ENCODE measurements at regions of chr10 and their contacts with region 1.

Region 1: DNA sequence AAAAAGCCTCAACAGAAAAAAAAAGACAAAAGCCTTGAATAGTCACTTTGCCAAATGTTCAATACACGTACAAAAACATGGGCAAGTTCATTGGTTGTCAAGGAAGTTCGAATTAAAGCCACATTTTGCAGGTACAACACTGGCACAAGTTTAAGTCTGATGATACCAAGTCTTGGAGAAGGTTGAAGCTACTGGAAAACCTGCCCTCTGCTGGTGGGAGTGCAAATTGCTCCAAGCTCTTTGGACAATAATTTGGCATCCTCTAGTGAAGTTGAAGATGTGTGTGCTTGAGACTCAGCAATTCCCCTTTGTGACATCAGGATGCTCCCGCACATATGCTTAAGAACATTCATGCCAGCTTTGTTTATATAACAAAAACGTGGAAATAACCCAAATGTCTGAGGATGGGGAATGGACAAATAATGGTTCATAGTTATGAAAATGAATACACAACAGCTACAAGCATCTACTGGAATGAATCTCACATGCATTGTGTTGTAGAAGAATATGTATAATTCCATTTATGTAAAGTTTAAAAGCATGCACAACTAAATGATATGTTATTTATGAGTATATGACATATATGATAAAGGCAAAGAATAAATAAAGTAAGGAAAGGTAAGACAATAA is 120.0 kb upstream of the PLPP4 start:
- DNase-seq: peak; percentile 66
- H3K4me3 ChIP-seq: no peak overlapping the region
- H3K27ac ChIP-seq: no peak overlapping the region
- H3K4me1 ChIP-seq: no peaks in the 10 kb centered on the region
- H3K27me3 ChIP-seq: peaks cover 0 to 2% of the 10 kb centered on the region in 2 experiments
- CTCF ChIP-seq: peak; percentile 82 to 85
- POLR2A ChIP-seq: no peak

Region 2: DNA sequence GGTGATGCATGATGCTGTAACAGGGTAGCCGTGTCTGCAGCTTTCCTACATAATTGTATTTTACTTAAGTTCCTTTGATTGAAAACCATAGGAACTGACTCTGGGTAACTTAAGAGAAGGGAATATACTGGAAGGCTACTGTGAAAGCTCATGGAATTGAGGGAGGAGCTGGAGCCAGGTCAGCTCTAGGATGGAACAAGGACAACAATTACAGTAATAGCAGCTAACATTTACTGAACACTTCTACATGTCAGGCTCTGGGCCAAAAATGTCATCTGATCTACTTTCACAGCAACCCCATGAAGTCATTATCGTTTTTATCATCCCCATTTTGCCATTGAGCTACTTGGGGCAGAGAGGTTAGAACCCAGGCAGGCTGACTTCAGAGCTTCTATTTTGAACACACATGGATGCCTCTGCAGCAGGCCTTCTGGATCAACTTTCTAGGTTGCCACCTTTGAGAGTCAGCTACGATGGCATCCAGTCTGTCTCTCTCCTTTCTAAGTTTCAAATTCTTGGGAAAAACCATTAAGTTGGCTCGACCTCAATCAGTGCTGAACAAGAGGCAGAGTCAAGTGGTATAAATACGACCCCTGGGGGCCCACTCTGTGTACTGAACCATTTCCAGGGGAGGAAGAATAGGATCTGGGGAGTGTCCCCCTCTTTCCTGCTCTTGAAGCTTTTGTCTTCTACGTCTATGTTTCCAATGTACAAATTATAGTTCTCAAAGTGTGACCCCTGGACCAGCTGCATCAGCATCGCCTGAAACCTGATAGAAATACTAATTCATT is 152.3 kb before region 1 on chr10:
- CTCF ChIA-PET with region 1: no interaction called
- POLR2A ChIA-PET with region 1: no interaction called
- dilution Hi-C with region 1: no loop called
- intact Hi-C with region 1: no loop called
- DNase-seq: no peak
- H3K4me3 ChIP-seq: no peak overlapping the region
- H3K27ac ChIP-seq: no peak overlapping the region
- H3K4me1 ChIP-seq: peaks cover 2% of the 10 kb centered on the region
- H3K27me3 ChIP-seq: no peaks in the 10 kb centered on the region
- CTCF ChIP-seq: no peak
- POLR2A ChIP-seq: no peak

Region 3: DNA sequence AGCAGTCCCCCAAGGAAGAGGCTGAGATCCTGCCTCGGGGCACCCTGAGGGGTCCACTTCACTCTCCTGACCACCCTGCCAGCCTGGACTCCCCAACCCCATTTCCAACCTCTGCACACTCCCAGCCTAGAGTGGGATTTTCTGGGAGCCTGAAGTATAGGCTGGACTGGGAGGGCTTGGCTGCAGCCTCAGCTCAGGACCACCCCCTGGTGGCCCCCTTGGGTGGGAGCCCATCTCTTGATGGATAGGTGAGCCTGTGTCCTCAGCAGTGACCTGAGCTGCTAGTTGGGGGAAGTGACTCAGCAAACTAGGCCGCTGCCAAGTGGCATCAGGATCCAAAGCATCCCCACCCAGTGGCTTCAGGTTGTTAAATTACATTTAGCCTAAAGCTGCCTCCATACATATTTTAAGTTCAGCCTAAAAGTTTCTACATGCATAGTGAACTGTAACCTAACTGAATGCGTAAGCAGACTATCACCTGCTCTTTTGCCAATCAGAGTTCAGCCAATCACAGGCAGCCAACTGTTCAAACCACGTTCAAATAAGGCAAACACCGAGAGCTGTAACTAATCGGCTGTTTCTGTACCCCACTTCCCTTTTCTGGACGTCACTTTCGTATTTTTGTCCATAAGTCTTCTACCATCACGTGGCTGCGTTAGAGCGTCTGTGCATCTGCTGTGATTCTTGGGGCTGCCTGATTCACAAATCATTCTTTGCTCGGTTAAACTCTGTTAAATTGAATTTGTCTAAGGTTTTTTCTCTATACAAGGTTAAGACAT is 264.0 kb after region 1 on chr10:
- CTCF ChIA-PET with region 1: interaction called, 4 read pairs
- POLR2A ChIA-PET with region 1: no interaction called
- dilution Hi-C with region 1: no loop called
- intact Hi-C with region 1: loop called (anchors 5 kb)
- DNase-seq: peak; percentile 47
- H3K4me3 ChIP-seq: no peak overlapping the region
- H3K27ac ChIP-seq: no peak overlapping the region
- H3K4me1 ChIP-seq: peaks cover 5% of the 10 kb centered on the region
- H3K27me3 ChIP-seq: no peaks in the 10 kb centered on the region
- CTCF ChIP-seq: peak; percentile 51 to 71
- POLR2A ChIP-seq: no peak